ENCODE measurements at regions of chr3 and their contacts with region 1.

Region 1: GRCh38 chr3:99579246-99579645 is 59.1 kb upstream of the COL8A1 start:
- DNase-seq: no peak
- ATAC-seq: no peak
- H3K4me3 ChIP-seq: no peak overlapping the region
- H3K27ac ChIP-seq: no peak overlapping the region
- H3K4me1 ChIP-seq: no peaks in the 10 kb centered on the region
- H3K27me3 ChIP-seq: no peaks in the 10 kb centered on the region
- CTCF ChIP-seq: no peak

Region 2: GRCh38 chr3:99128235-99128634 is 451.0 kb before region 1 on chr3:
- CTCF ChIA-PET with region 1: no interaction called
- POLR2A ChIA-PET with region 1: no interaction called
- in situ Hi-C with region 1: no loop called
- intact Hi-C with region 1: no loop called
- DNase-seq: no peak
- ATAC-seq: no peak
- H3K4me3 ChIP-seq: no peak overlapping the region
- H3K27ac ChIP-seq: no peak overlapping the region
- H3K4me1 ChIP-seq: no peaks in the 10 kb centered on the region
- H3K27me3 ChIP-seq: no peaks in the 10 kb centered on the region
- CTCF ChIP-seq: no peak

Region 3: GRCh38 chr3:99614768-99615167 is 35.5 kb after region 1 on chr3:
- CTCF ChIA-PET with region 1: interaction called, 10 read pairs
- POLR2A ChIA-PET with region 1: no interaction called
- in situ Hi-C with region 1: no loop called
- intact Hi-C with region 1: no loop called
- DNase-seq: no peak
- ATAC-seq: no peak
- H3K4me3 ChIP-seq: no peak overlapping the region
- H3K27ac ChIP-seq: no peak overlapping the region
- H3K4me1 ChIP-seq: no peaks in the 10 kb centered on the region
- H3K27me3 ChIP-seq: no peaks in the 10 kb centered on the region
- CTCF ChIP-seq: no peak

Measured in Panc1 (cell line).